CD4-positive, alpha-beta memory T cell (primary cell): ENCODE measurements at regions of chr17 and their contacts with region 1.

Region 1: DNA sequence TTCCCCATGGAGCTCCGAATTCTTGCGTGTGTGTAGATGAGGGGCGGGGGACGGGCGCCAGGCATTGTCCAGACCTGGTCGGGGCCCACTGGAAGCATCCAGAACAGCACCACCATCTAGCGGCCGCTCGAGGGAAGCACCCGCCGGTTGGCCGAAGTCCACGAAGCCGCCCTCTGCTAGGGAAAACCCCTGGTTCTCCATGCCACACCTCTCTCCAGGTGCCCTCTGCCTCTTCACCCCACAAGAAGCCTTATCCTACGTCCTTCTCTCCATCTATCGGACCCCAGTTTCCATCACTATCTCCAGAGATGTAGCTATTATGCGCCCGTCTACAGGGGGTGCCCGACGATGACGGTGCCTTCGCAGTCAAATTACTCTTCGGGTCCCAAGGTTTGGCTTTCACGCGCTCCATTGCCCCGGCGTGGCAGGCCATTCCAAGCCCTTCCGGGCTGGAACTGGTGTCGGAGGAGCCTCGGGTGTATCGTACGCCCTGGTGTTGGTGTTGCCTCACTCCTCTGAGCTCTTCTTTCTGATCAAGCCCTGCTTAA is 617 bp upstream of the SENP3 start:
- DNase-seq: peak; percentile 75 to 85 (median 76)
- H3K4me3 ChIP-seq: peak overlapping the region; percentile 72 to 84
- H3K4me3 Mint-ChIP-seq: peak overlapping the region; percentile 89 to 98 (median 94)
- H3K27ac ChIP-seq: peak overlapping the region; percentile 96
- H3K27ac Mint-ChIP-seq: peak overlapping the region; percentile 95 to 99 (median 97)
- H3K4me1 ChIP-seq: peaks cover 37% of the 10 kb centered on the region
- H3K4me1 Mint-ChIP-seq: peaks cover 25 to 37% (median 30%) of the 10 kb centered on the region in 4 donors
- H3K27me3 ChIP-seq: no peaks in the 10 kb centered on the region
- H3K27me3 Mint-ChIP-seq: no peaks in the 10 kb centered on the region

Region 2: GRCh38 chr17:7454980-7455379 is 106.1 kb before region 1 on chr17:
- CTCF ChIA-PET with region 1: interaction called, 8 read pairs
- POLR2A ChIA-PET with region 1: no interaction called
- intact Hi-C with region 1: loop called (anchors 1 kb)
- DNase-seq: no peak
- H3K4me3 ChIP-seq: peak overlapping the region; percentile 86 to 93
- H3K4me3 Mint-ChIP-seq: peak overlapping the region; percentile 92 to 100 (median 94)
- H3K27ac ChIP-seq: peak overlapping the region; percentile 73
- H3K27ac Mint-ChIP-seq: peak overlapping the region; percentile 88 to 98 (median 94)
- H3K4me1 ChIP-seq: peaks cover 23% of the 10 kb centered on the region
- H3K4me1 Mint-ChIP-seq: peaks cover 18 to 36% (median 22%) of the 10 kb centered on the region in 4 donors
- H3K27me3 ChIP-seq: no peaks in the 10 kb centered on the region
- H3K27me3 Mint-ChIP-seq: peaks cover 0 to 2% of the 10 kb centered on the region in 2 donors

Region 3: DNA sequence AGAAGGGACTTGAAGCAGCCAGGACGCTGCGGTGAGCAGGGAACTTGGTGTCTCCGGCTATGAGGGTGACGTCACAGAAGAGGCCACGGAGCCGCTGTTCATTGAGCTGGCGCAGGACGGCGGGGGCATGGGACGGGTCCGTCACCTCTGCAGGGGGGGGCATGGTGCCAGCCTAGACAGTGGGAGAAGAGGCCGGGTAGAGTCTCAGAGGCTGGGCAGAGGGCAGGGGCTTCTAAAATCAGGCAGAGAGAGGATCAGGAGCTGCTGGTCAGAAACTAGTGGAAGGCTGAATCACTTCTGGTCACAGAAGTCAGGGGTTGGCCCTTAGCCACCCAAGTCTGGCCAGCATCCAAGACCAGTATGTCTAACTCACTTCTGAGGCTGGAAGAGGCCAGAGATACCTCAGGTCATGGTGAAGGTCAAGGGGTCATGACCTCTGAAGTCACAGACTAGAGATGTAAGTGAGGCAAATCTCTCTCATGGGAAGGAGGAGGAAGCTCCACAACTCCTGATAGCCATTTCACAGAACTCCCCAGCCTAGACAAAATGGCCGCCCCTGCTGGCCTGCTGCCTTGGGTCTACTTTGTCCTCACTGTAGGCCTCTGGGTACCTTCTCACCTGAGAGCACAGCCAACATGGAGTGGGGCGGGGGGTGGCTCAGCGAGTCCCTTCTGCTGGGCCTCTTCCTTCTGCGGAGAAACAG is 94.3 kb before region 1 on chr17:
- CTCF ChIA-PET with region 1: no interaction called
- POLR2A ChIA-PET with region 1: no interaction called
- intact Hi-C with region 1: no loop called
- DNase-seq: no peak
- H3K4me3 ChIP-seq: no peak overlapping the region
- H3K4me3 Mint-ChIP-seq: no peak overlapping the region
- H3K27ac ChIP-seq: no peak overlapping the region
- H3K27ac Mint-ChIP-seq: peak overlapping the region in 1 of 7 donors; percentile 40
- H3K4me1 ChIP-seq: peaks cover 8% of the 10 kb centered on the region
- H3K4me1 Mint-ChIP-seq: peaks cover 4 to 18% (median 6%) of the 10 kb centered on the region in 4 donors
- H3K27me3 ChIP-seq: no peaks in the 10 kb centered on the region
- H3K27me3 Mint-ChIP-seq: no peaks in the 10 kb centered on the region

Region 4: GRCh38 chr17:7523033-7523432 is 38.1 kb before region 1 on chr17:
- CTCF ChIA-PET with region 1: interaction called, 173 read pairs
- POLR2A ChIA-PET with region 1: interaction called, 16 read pairs
- intact Hi-C with region 1: loop called (anchors 1 kb)
- DNase-seq: peak; percentile 43 to 60 (median 54)
- H3K4me3 ChIP-seq: no peak overlapping the region
- H3K4me3 Mint-ChIP-seq: peak overlapping the region in 1 of 8 donors; percentile 49
- H3K27ac ChIP-seq: no peak overlapping the region
- H3K27ac Mint-ChIP-seq: peak overlapping the region in 3 of 7 donors; percentile 17 to 57 (median 45)
- H3K4me1 ChIP-seq: peaks cover 4% of the 10 kb centered on the region
- H3K4me1 Mint-ChIP-seq: peaks cover 3 to 6% (median 4%) of the 10 kb centered on the region in 4 donors
- H3K27me3 ChIP-seq: no peaks in the 10 kb centered on the region
- H3K27me3 Mint-ChIP-seq: no peaks in the 10 kb centered on the region

Region 5: GRCh38 chr17:7548585-7549400 is 12.3 kb before region 1 on chr17 and contains the start of gene TNFSF12:
- CTCF ChIA-PET with region 1: interaction called, 44 read pairs
- POLR2A ChIA-PET with region 1: interaction called, 56 read pairs
- intact Hi-C with region 1: no loop called
- DNase-seq: peak; percentile 38 to 64 (median 42)
- H3K4me3 ChIP-seq: peak within 1 kb of the TSS; percentile 72 to 82
- H3K4me3 Mint-ChIP-seq: peak within 1 kb of the TSS; percentile 88 to 96 (median 92)
- H3K27ac ChIP-seq: peak within 1 kb of the TSS; percentile 79
- H3K27ac Mint-ChIP-seq: peak within 1 kb of the TSS; percentile 81 to 96 (median 94)
- H3K4me1 ChIP-seq: peaks cover 37% of the 10 kb centered on the region
- H3K4me1 Mint-ChIP-seq: peaks cover 30 to 52% (median 43%) of the 10 kb centered on the region in 4 donors
- H3K27me3 ChIP-seq: no peaks in the 10 kb centered on the region
- H3K27me3 Mint-ChIP-seq: no peaks in the 10 kb centered on the region
- total RNA-seq, gene TNFSF12: 45.1 to 52.2 TPM

Region 6: DNA sequence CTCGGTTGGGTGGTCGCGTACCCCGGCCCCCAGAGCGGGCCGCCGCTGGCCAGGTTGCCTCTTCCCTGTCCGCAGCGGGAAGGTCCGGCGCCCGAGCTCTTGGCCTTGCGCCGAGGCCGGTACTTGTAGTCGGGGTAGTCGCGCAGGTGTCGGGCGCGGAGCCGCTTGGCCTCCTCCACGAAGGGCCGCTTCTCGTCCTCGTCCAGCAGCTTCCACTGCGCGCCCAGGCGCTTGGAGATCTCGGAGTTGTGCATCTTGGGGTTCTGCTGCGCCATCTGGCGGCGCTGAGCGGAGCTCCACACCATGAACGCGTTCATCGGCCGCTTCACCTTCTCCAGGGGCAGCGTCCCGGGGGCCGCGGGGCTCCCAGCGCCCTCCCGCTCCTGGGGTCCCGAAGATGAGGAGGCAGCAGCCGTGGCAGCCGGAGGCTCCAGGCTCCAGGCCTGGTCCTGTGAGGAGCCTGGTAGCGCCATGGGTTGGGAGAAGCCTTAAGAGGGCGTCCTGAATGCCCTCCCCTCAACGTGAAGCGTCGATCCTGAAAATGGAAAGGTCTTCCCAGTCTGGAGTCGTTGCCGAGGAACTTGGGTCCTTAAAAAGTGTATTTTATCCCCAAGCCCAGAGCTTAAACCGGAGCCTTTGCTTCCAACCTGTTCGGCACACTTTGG is 28.2 kb after region 1 on chr17:
- CTCF ChIA-PET with region 1: interaction called, 16 read pairs
- POLR2A ChIA-PET with region 1: interaction called, 34 read pairs
- intact Hi-C with region 1: loop called (anchors 1 kb)
- DNase-seq: peak; percentile 57 to 65 (median 60)
- H3K4me3 ChIP-seq: no peak overlapping the region
- H3K4me3 Mint-ChIP-seq: no peak overlapping the region
- H3K27ac ChIP-seq: no peak overlapping the region
- H3K27ac Mint-ChIP-seq: no peak overlapping the region
- H3K4me1 ChIP-seq: peaks cover 24% of the 10 kb centered on the region
- H3K4me1 Mint-ChIP-seq: peaks cover 5 to 22% (median 11%) of the 10 kb centered on the region in 4 donors
- H3K27me3 ChIP-seq: no peaks in the 10 kb centered on the region
- H3K27me3 Mint-ChIP-seq: no peaks in the 10 kb centered on the region

Region 7: GRCh38 chr17:7667656-7668406 is 106.7 kb after region 1 on chr17:
- CTCF ChIA-PET with region 1: no interaction called
- POLR2A ChIA-PET with region 1: no interaction called
- intact Hi-C with region 1: no loop called
- DNase-seq: no peak
- H3K4me3 ChIP-seq: no peak overlapping the region
- H3K4me3 Mint-ChIP-seq: no peak overlapping the region
- H3K27ac ChIP-seq: no peak overlapping the region
- H3K27ac Mint-ChIP-seq: no peak overlapping the region
- H3K4me1 ChIP-seq: no peaks in the 10 kb centered on the region
- H3K4me1 Mint-ChIP-seq: no peaks in the 10 kb centered on the region
- H3K27me3 ChIP-seq: no peaks in the 10 kb centered on the region
- H3K27me3 Mint-ChIP-seq: no peaks in the 10 kb centered on the region